Activated CD8-positive, alpha-beta T cell treated with anti-CD3 and anti-CD28 coated beads, Interleukin-2, amount 10 ng/mL, durations not matched to agents 7 days and 5 days (primary cell): ENCODE measurements at regions of chr9 and their contacts with region 1.

Region 1: GRCh38 chr9:137064027-137064879 is 6.1 kb downstream of the SAPCD2 start:
- DNase-seq: peak; percentile 63
- ATAC-seq: no peak
- H3K4me3 Mint-ChIP-seq: no peak overlapping the region
- H3K27ac Mint-ChIP-seq: no peak overlapping the region
- H3K4me1 Mint-ChIP-seq: peaks cover 16% of the 10 kb centered on the region
- H3K27me3 Mint-ChIP-seq: no peaks in the 10 kb centered on the region

Region 2: DNA sequence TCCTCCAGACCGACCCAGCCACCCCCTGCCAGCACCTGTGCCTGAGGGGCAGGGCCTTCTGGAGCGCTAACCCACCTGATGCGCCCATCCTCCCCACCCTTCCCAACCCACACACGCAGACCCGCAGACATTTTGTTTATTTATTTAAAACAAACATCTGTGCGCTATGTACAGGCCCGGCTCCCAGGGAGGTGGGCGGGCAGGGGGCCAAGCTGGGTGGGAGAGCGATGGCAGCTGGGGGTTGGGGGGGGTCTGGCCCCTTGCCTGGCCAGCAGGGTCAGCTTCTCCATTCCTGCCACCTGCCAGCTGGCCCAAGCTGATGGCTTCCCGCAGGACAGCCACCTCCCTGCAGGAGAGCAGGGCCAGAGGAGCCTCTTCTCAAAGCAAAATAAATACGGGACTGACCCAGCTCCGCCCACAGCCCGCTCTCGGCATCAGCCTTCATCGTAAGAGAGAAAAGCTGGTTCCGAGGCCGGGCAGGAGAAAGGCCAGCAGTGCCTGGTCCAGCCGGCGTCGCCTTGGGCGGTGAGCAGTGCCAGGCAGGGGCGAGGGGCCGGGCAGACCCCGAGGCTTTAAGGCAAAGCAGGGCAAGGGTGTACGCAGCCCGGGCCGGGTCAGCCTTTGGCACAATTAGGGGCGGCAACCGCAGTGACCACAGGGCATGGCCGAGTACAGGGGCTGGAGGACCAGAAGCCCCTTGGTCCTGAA is 57.0 kb before region 1 on chr9:
- CTCF ChIA-PET with region 1: no interaction called
- POLR2A ChIA-PET with region 1: no interaction called
- DNase-seq: no peak
- ATAC-seq: no peak
- H3K4me3 Mint-ChIP-seq: no peak overlapping the region
- H3K27ac Mint-ChIP-seq: no peak overlapping the region
- H3K4me1 Mint-ChIP-seq: peaks cover 13% of the 10 kb centered on the region
- H3K27me3 Mint-ChIP-seq: no peaks in the 10 kb centered on the region

Region 3: GRCh38 chr9:137046098-137046787 is 18.0 kb before region 1 on chr9 and contains the start of gene NPDC1:
- CTCF ChIA-PET with region 1: interaction called, 78 read pairs
- POLR2A ChIA-PET with region 1: no interaction called
- DNase-seq: peak; percentile 89
- ATAC-seq: peak; percentile 82
- H3K4me3 Mint-ChIP-seq: peak within 1 kb of the TSS; percentile 71
- H3K27ac Mint-ChIP-seq: no peak within 1 kb of the TSS
- H3K4me1 Mint-ChIP-seq: peaks cover 15% of the 10 kb centered on the region
- H3K27me3 Mint-ChIP-seq: peaks cover 28% of the 10 kb centered on the region
- total RNA-seq, gene NPDC1: 20.1 to 29.9 TPM

Region 4: DNA sequence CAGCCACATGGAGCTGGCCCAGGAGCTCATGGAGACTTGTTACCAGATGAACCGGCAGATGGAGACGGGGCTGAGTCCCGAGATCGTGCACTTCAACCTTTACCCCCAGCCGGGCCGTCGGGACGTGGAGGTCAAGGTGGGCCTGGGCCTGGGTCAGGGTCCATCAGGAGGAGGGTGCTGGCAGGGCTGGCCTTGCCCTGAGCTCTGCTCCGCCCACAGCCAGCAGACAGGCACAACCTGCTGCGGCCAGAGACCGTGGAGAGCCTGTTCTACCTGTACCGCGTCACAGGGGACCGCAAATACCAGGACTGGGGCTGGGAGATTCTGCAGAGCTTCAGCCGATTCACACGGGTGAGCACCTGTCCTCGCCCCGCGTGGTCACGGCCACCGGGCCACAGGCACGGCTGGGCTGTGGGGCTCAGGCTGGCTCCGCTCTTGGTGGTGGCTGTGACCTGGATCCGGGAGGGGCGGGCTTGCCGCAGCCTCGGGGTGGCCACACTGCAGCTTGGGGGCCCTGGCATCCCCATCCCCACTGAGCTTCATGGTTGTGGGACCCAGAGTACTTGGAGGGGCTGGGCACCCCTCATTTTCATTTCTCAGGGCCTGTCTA is 43.2 kb after region 1 on chr9:
- CTCF ChIA-PET with region 1: no interaction called
- POLR2A ChIA-PET with region 1: no interaction called
- DNase-seq: no peak
- ATAC-seq: no peak
- H3K4me3 Mint-ChIP-seq: no peak overlapping the region
- H3K27ac Mint-ChIP-seq: no peak overlapping the region
- H3K4me1 Mint-ChIP-seq: no peaks in the 10 kb centered on the region
- H3K27me3 Mint-ChIP-seq: no peaks in the 10 kb centered on the region